Ascending aorta (tissue), 2 donors: ENCODE measurements at regions of chr10 and their contacts with region 1.

Region 1: GRCh38 chr10:27742195-27743011 is 3.2 kb downstream of the MKX start:
- DNase-seq: peak in 1 of 2 donors; percentile 93
- H3K4me3 ChIP-seq: peak overlapping the region; percentile 50 to 78
- H3K27ac ChIP-seq: peak overlapping the region; percentile 92 to 98
- H3K4me1 ChIP-seq: peaks cover 0 to 9% of the 10 kb centered on the region in 2 donors
- H3K27me3 ChIP-seq: no peaks in the 10 kb centered on the region
- CTCF ChIP-seq: peak; percentile 86 to 90 (median 90)

Region 2: GRCh38 chr10:27504007-27504807 is 238.2 kb before region 1 on chr10 and contains the start of gene RAB18:
- intact Hi-C with region 1: loop called (anchors 2 kb)
- DNase-seq: peak; percentile 92 to 99
- H3K4me3 ChIP-seq: peak within 1 kb of the TSS; percentile 73 to 96
- H3K27ac ChIP-seq: peak within 1 kb of the TSS; percentile 91 to 93
- H3K4me1 ChIP-seq: peaks cover 4 to 19% of the 10 kb centered on the region in 2 donors
- H3K27me3 ChIP-seq: no peaks in the 10 kb centered on the region
- CTCF ChIP-seq: peak in 1 of 3 experiments; percentile 7
- total RNA-seq, gene RAB18: 8.3 TPM

Region 3: DNA sequence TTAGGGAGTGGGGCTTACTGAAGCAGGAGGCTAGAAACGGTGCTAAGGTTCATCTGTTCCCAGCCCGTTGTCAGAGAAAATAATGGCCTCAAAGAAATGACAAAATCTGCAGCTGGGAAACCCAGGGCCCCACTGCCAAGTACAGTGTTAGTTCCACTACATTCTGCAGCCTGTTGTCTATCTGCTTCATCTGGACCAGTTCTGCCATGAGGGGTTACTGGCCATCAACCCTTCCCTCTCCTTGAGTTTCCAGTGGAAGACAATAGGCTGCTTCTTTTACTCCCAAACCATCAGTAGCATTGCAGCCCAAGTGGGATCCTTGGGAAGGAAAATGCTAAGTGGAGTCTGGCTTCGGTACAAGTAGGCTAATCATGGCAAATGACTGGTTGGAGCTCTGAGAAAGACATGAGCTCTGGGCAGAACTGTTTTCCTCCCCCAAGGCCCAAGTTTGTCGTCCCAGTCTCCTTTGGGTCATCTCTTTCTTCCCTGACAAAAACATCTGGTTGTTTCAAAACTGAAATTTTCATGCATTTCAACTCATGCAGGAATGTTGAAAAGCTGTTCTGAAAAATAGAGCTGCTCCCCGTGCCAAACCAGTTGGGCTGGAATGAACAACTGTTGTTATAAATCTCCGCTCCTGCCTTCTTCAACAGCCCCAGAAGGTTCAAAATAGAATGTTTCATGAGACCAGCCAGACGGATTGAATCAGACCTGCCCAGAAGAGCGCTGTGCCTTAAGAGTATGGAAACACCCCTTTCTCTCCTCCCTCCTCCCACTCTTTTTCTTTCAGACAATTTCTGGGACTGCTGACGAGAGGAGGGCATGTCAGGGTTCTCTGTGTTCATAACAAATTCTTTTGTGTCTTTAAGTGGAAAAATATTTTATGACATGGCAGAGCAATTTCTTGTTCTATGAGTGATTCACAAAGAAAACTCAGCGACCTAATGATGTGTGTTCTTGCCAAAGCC is 121.7 kb before region 1 on chr10:
- intact Hi-C with region 1: loop called (anchors 2 kb)
- DNase-seq: peak in 1 of 2 donors; percentile 81
- H3K4me3 ChIP-seq: peak overlapping the region; percentile 18 to 40
- H3K27ac ChIP-seq: peak overlapping the region; percentile 82 to 86
- H3K4me1 ChIP-seq: peaks cover 4 to 17% of the 10 kb centered on the region in 2 donors
- H3K27me3 ChIP-seq: no peaks in the 10 kb centered on the region
- CTCF ChIP-seq: no peak

Region 4: DNA sequence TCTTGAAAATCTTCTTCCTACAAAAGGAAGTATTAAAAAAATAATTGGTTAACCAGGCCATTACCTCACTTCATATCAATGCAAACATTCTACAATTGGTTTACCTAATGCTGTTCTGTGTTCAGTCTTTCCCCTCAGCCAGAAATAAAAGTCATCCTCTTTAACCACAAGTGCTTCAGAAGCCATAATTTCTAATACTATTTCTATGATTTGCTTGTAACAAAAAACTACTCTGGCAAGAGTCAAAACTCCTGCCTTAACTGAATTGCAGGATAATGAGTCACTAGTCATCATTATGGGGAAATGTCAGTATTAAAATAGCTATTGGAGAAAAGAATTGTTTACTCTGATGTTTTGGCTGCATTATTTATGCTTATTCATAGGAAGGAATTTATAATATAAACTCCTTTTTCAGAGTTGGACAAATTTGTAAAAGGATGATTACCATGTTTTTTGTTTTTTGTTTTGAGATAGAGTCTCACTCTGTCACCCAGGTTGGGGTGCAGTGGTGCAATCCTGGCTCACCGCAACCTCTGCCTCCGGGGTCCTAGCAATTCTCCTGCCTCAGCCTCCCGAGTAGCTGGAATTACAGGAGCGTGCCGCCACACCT is 311.9 kb after region 1 on chr10:
- intact Hi-C with region 1: loop called (anchors 2 kb)
- DNase-seq: no peak
- H3K4me3 ChIP-seq: no peak overlapping the region
- H3K27ac ChIP-seq: peak overlapping the region; percentile 71 to 72
- H3K4me1 ChIP-seq: peaks cover 0 to 12% of the 10 kb centered on the region in 2 donors
- H3K27me3 ChIP-seq: no peaks in the 10 kb centered on the region
- CTCF ChIP-seq: no peak

Region 5: GRCh38 chr10:28241741-28242399 is 499.5 kb after region 1 on chr10:
- intact Hi-C with region 1: loop called (anchors 5 kb)
- DNase-seq: no peak
- H3K4me3 ChIP-seq: no peak overlapping the region
- H3K27ac ChIP-seq: no peak overlapping the region
- H3K4me1 ChIP-seq: no peaks in the 10 kb centered on the region
- H3K27me3 ChIP-seq: no peaks in the 10 kb centered on the region
- CTCF ChIP-seq: peak; percentile 82 to 90 (median 83)

Region 6: GRCh38 chr10:28381903-28382347 is 639.5 kb after region 1 on chr10:
- intact Hi-C with region 1: loop called (anchors 5 kb)
- DNase-seq: peak; percentile 22 to 95
- H3K4me3 ChIP-seq: peak overlapping the region in 1 of 2 donors; percentile 35
- H3K27ac ChIP-seq: no peak overlapping the region
- H3K4me1 ChIP-seq: peaks cover 0 to 2% of the 10 kb centered on the region in 2 donors
- H3K27me3 ChIP-seq: no peaks in the 10 kb centered on the region
- CTCF ChIP-seq: peak; percentile 93 to 98 (median 93)